Activated CD4-positive, alpha-beta memory T cell treated with anti-CD3 and anti-CD28 coated beads for 36 hours (primary cell): ENCODE measurements at regions of chr5 and their contacts with region 1.

Region 1: GRCh38 chr5:116574367-116575325 is at the start of gene SEMA6A:
- DNase-seq: peak; percentile 79
- H3K4me3 Mint-ChIP-seq: peak within 1 kb of the TSS; percentile 58
- H3K27ac Mint-ChIP-seq: no peak within 1 kb of the TSS
- H3K4me1 Mint-ChIP-seq: peaks cover 25% of the 10 kb centered on the region
- H3K27me3 Mint-ChIP-seq: peaks cover 72% of the 10 kb centered on the region
- total RNA-seq, gene SEMA6A: not detected

Region 2: DNA sequence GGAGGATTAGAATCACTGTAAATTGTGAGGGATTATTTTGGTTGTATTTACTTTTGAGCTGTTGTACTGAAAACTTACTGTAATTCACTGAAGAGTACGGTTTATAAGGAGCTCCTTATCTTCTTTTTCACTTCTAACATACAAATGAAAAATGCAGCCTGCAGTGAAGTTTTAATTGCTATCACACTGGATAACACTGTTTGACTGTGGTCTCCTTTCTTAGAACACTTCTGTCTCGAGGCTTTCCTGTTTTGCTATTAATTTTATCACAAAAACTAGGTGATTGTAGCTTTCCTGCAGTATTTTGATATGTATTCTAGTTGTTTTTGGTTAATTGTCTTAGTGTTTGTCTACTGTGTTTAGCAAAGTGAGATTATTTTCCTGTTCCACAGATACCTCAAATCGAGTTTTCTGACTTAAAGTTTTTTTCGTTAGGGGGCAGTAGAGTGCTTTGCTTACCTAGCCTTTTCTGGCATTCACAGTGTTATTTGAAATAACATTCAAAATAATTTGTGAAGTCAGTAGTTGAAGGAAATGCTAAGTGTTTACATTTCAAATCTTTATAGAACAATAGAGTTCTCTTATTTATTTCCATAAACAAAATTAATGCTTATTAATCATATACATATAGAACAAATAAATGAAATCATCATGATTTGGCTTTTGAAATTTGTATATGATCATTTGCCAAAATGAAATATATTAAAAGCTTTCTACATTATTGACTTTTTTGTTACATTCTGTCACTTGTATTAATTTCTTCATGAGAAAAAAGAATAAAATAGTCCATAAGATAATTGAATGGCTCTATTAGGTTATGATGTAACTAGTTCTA is 436.9 kb before region 1 on chr5:
- CTCF ChIA-PET with region 1: interaction called, 4 read pairs
- POLR2A ChIA-PET with region 1: no interaction called
- intact Hi-C with region 1: loop called (anchors 5 kb)
- DNase-seq: no peak
- H3K4me3 Mint-ChIP-seq: no peak overlapping the region
- H3K27ac Mint-ChIP-seq: no peak overlapping the region
- H3K4me1 Mint-ChIP-seq: peaks cover 22% of the 10 kb centered on the region
- H3K27me3 Mint-ChIP-seq: no peaks in the 10 kb centered on the region

Region 3: DNA sequence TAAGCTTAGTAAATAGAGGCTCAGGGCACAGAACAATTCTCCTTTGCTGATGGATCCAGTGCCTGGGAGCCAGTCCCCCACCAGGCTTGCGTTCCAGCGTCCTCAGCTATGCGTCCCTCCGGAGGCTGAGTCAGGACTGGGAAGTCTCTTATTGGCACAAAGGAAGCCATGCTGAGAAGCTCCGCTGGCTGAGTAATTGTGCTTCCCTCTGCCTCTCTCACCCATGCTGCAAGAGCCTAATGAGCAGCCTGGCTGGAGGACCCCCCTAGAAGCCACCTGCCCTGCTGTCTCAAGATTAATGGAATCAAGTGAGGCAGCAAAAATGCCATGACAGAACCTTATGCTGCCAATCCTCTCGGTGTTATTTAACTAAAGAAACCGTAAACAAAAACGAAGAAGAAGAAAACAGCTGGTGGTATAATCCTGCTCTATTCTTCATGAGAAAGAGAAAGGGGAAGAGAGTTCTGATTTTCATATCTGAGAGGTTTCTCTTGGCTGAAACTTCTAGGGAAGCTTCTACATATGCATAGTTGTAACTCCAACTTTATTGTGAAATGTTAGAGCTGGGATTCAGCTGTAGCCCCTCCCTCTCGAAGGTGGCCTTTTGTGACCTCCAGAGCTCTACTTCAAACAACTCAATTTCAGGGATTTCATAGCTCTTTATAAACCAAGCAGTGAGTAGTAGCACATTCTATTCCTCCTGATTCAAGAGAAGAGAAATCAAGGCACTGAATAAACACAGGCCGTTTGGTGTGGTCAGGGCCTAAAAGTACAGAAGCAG is 185.4 kb after region 1 on chr5:
- CTCF ChIA-PET with region 1: no interaction called
- POLR2A ChIA-PET with region 1: no interaction called
- intact Hi-C with region 1: loop called (anchors 10 kb)
- DNase-seq: no peak
- H3K4me3 Mint-ChIP-seq: no peak overlapping the region
- H3K27ac Mint-ChIP-seq: no peak overlapping the region
- H3K4me1 Mint-ChIP-seq: no peaks in the 10 kb centered on the region
- H3K27me3 Mint-ChIP-seq: no peaks in the 10 kb centered on the region

Region 4: DNA sequence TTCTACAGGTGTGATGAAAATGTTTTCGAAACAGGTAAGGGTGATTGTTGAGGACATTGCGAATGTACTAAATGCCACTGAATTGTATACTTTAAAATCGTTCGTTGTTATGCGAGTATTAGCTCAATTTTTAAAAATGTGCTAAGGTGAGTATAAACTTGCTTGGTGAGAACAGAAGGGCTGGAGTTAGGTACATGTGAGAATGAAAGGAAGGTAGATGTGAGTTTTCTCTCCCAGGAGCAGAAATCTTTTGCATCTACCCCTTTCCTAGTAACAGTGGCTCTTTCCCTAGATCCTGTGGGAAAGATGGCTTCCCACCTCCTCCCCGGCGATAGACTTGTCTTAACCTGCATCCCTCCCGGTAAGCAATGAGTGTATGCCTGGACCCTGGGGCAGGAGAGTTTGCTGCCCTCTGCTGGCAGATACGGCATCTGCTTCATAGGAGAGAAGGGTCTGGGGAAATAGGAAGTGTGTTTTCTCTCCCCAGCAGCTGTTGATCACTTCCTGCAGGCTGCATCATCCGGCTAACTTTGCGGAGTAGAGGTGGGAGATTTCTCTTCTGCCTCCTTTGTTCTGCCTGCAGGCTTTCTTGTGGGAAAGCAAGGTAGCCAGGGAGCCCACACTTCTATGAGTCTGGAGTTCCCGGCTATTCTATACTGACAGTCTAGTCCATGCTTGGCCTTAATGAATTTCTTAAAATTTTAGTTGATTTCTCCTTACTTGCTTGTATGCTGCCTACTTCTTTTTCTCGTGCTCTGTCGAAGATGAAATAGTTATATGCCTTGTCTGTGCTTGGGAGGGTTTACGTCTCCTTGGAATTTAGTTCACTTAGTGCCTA is 373.3 kb after region 1 on chr5:
- CTCF ChIA-PET with region 1: no interaction called
- POLR2A ChIA-PET with region 1: no interaction called
- intact Hi-C with region 1: loop called (anchors 1 kb)
- DNase-seq: peak; percentile 73
- H3K4me3 Mint-ChIP-seq: no peak overlapping the region
- H3K27ac Mint-ChIP-seq: no peak overlapping the region
- H3K4me1 Mint-ChIP-seq: no peaks in the 10 kb centered on the region
- H3K27me3 Mint-ChIP-seq: no peaks in the 10 kb centered on the region

Region 5: DNA sequence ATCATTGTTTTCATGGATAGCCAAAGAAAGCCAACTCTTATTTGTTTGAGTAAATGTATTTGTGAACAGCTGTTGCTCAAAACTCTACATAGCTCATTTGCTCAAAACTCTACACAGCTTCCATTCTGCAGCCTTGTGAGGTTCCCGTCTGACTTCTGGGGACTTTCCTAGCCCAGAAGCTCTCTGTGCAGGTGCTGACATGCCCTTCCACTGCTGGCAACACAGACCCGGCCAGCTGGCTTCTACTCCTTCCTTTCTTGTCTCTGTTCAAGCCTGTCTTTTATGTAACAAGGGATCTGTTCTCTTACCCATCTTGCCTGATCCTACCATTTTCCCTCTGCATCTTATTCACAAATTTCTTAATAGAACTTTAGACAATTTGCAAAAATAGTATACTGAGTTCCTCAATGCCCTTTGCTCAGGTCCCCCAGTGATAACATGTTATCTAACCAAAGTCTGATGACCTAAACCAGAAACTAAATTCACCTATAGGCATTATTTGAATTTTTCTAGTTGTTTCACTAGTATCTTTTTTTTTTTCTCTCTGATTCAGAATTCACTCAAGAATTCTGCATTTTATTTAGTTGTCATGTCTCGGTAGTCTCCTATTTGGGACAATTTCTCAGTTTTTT is 556.5 kb after region 1 on chr5:
- CTCF ChIA-PET with region 1: no interaction called
- POLR2A ChIA-PET with region 1: no interaction called
- intact Hi-C with region 1: no loop called
- DNase-seq: no peak
- H3K4me3 Mint-ChIP-seq: no peak overlapping the region
- H3K27ac Mint-ChIP-seq: no peak overlapping the region
- H3K4me1 Mint-ChIP-seq: no peaks in the 10 kb centered on the region
- H3K27me3 Mint-ChIP-seq: no peaks in the 10 kb centered on the region